ENCODE measurements at regions of chr6 and their contacts with region 1.

Region 1: DNA sequence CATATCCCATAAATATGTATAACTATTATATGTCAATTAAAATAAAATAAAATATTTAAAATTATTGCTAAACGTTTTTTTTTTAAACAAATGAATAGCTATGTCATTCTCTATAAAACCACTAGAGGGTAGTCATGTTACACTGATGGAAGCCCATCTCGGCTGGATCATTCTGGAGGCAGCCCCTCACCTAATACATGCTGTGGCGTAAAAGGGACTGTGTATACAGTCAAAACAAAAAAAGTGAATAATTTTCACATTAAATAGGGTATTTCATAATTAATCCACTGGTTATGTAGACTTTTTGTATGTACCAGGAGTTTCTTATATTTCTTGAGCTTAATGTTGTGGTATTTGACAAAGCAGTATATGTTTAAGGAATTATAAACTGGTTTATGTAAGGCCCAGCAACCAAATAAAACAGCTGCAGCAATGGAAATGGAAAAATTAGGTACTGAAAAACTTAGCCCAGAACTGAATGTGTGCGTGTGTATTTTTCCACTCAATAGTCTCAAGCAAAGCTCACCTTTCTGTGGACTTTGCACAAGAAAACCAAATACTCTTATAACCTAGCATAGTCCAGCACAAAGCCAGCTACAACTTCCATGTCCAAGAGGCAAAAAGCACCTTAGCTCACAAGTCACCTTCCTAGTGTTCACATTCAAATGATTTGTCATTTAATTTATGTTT is 81.7 kb downstream of the COL9A1 start:
- DNase-seq: peak; percentile 7
- ATAC-seq: peak; percentile 77
- H3K4me3 Mint-ChIP-seq: no peak overlapping the region
- H3K27ac Mint-ChIP-seq: no peak overlapping the region
- H3K4me1 Mint-ChIP-seq: no peaks in the 10 kb centered on the region
- H3K27me3 Mint-ChIP-seq: peaks cover 10% of the 10 kb centered on the region
- CTCF ChIP-seq: peak; percentile 81

Region 2: GRCh38 chr6:70142034-70142433 is 79.1 kb before region 1 on chr6:
- CTCF ChIA-PET with region 1: no interaction called
- POLR2A ChIA-PET with region 1: no interaction called
- intact Hi-C with region 1: no loop called
- DNase-seq: no peak
- ATAC-seq: no peak
- H3K4me3 Mint-ChIP-seq: no peak overlapping the region
- H3K27ac Mint-ChIP-seq: no peak overlapping the region
- H3K4me1 Mint-ChIP-seq: no peaks in the 10 kb centered on the region
- H3K27me3 Mint-ChIP-seq: peaks cover 2% of the 10 kb centered on the region
- CTCF ChIP-seq: no peak

Region 3: DNA sequence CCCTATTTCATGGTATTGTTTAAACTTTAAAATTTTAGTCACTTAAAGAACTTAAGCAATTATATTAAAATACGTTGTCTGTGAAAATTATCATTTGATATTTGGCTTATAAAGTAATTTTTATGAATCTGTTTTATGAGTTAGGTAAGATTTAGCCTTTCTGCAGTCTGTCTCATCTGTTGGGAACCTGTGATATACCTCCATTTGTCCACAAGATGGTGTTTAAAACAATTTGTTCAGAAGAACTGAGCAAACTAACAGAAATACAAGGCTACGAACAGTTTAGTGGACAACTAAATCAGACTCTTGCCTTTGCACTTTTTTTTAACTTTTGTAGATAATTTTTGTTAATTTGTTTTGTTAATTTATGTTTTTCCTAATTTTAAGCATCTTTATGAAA is 10.7 kb before region 1 on chr6:
- CTCF ChIA-PET with region 1: interaction called, 28 read pairs
- POLR2A ChIA-PET with region 1: no interaction called
- intact Hi-C with region 1: no loop called
- DNase-seq: no peak
- ATAC-seq: no peak
- H3K4me3 Mint-ChIP-seq: no peak overlapping the region
- H3K27ac Mint-ChIP-seq: no peak overlapping the region
- H3K4me1 Mint-ChIP-seq: no peaks in the 10 kb centered on the region
- H3K27me3 Mint-ChIP-seq: peaks cover 9% of the 10 kb centered on the region
- CTCF ChIP-seq: no peak

Region 4: GRCh38 chr6:70231311-70231710 is 10.1 kb after region 1 on chr6:
- CTCF ChIA-PET with region 1: interaction called, 55 read pairs
- POLR2A ChIA-PET with region 1: no interaction called
- intact Hi-C with region 1: no loop called
- DNase-seq: no peak
- ATAC-seq: no peak
- H3K4me3 Mint-ChIP-seq: no peak overlapping the region
- H3K27ac Mint-ChIP-seq: no peak overlapping the region
- H3K4me1 Mint-ChIP-seq: no peaks in the 10 kb centered on the region
- H3K27me3 Mint-ChIP-seq: peaks cover 5% of the 10 kb centered on the region
- CTCF ChIP-seq: no peak

Region 5: GRCh38 chr6:70236343-70236742 is 15.2 kb after region 1 on chr6:
- CTCF ChIA-PET with region 1: interaction called, 55 read pairs
- POLR2A ChIA-PET with region 1: no interaction called
- intact Hi-C with region 1: no loop called
- DNase-seq: no peak
- ATAC-seq: no peak
- H3K4me3 Mint-ChIP-seq: no peak overlapping the region
- H3K27ac Mint-ChIP-seq: no peak overlapping the region
- H3K4me1 Mint-ChIP-seq: no peaks in the 10 kb centered on the region
- H3K27me3 Mint-ChIP-seq: no peaks in the 10 kb centered on the region
- CTCF ChIP-seq: no peak

Region 6: DNA sequence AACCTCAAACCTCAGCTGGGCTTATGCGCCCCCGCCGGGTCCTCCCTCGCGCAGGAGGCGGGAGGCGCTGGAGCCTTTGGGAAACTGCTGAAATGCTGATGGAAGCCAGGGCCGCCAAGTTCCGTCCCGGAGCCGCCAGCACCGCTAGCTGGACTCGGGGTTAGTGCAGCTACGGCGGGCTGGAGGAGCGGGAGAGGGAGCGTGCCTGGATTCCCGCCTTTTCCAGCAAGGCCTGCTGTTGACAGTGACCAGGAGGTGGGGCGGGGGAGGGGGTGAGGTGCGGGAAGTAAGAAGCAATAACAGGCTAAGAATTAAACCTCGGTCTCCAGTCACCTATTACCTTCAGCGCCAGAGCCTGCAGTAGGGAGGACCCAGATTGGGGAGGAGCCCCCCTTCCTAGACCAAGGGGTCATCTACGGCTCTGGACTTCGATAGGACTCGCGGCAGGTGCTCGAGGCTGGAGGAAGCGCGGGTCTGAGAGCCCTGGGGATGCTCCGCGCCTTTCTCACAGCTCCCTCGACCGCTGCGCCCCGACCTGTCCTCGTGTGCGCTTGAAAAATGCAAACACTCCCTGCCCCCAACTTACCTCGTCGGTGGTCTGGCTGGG is 61.2 kb after region 1 on chr6:
- CTCF ChIA-PET with region 1: no interaction called
- POLR2A ChIA-PET with region 1: no interaction called
- intact Hi-C with region 1: no loop called
- DNase-seq: no peak
- ATAC-seq: no peak
- H3K4me3 Mint-ChIP-seq: no peak overlapping the region
- H3K27ac Mint-ChIP-seq: no peak overlapping the region
- H3K4me1 Mint-ChIP-seq: no peaks in the 10 kb centered on the region
- H3K27me3 Mint-ChIP-seq: peaks cover 34% of the 10 kb centered on the region
- CTCF ChIP-seq: no peak

Region 7: DNA sequence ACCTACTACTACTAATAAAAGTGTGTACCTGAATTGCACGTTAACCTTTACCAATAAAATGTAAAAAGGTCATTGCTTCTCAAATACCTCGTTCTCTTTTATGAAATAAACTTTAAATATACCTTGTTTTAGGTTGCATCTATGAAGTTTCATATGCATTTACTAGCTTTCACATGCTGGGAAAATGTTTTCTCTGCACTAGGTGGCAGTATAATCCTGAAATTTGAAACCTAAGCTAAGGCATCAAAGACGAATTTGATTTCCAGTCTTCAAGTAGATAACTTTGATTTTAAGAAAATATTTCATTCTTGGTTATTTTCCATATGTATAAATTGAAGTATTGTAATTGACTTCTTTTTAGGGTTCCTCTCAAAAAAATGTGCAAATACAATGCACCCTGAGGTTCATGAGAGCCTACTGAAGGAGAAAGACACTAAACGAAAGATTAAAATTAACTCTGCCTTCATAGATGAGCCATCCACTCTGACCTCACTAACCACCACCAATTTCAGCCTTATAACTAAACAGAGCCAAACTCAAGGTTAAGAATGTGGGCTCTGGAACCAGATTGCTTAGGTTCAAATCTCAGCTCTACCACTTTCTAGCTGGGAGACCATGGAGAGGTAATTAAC is 89.0 kb after region 1 on chr6:
- CTCF ChIA-PET with region 1: interaction called, 30 read pairs
- POLR2A ChIA-PET with region 1: no interaction called
- intact Hi-C with region 1: no loop called
- DNase-seq: no peak
- ATAC-seq: no peak
- H3K4me3 Mint-ChIP-seq: no peak overlapping the region
- H3K27ac Mint-ChIP-seq: no peak overlapping the region
- H3K4me1 Mint-ChIP-seq: peaks cover 7% of the 10 kb centered on the region
- H3K27me3 Mint-ChIP-seq: peaks cover 22% of the 10 kb centered on the region
- CTCF ChIP-seq: peak; percentile 42

Region 8: GRCh38 chr6:70369332-70369950 is 148.3 kb after region 1 on chr6:
- CTCF ChIA-PET with region 1: interaction called, 80 read pairs
- POLR2A ChIA-PET with region 1: no interaction called
- intact Hi-C with region 1: loop called (anchors 2 kb)
- DNase-seq: peak; percentile 74
- ATAC-seq: peak; percentile 94
- H3K4me3 Mint-ChIP-seq: no peak overlapping the region
- H3K27ac Mint-ChIP-seq: no peak overlapping the region
- H3K4me1 Mint-ChIP-seq: no peaks in the 10 kb centered on the region
- H3K27me3 Mint-ChIP-seq: peaks cover 5% of the 10 kb centered on the region
- CTCF ChIP-seq: peak; percentile 93

Region 9: DNA sequence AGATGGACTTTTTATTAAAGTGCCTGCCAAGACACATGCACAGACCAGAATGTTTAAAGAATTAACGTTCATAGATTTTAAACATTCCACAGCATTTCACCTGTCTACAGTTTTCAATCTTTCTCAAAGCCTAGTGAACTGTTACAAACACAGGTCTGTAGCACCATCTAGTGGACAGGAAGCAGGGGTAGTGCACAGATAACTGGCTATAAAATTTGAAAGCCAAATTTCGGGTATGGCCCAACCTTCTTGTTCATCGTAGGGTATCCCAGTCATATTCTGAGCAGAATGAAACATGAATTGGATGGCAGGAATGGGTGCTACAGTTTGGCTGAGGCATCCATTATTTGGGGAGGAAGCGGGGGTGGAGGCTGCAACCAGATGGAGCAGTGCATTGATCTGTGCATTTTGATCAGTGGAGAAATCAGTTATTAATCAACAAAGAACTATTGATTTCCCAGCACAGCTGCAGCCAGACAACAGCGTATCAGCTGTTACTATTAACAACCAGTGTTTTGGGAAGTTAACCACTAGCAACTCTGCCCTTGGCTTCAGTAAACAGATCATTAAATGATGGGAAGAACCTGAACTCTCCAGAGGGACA is 791.8 kb after region 1 on chr6:
- CTCF ChIA-PET with region 1: interaction called, 11 read pairs
- POLR2A ChIA-PET with region 1: no interaction called
- intact Hi-C with region 1: no loop called
- DNase-seq: peak; percentile 15
- ATAC-seq: peak; percentile 51
- H3K4me3 Mint-ChIP-seq: no peak overlapping the region
- H3K27ac Mint-ChIP-seq: no peak overlapping the region
- H3K4me1 Mint-ChIP-seq: no peaks in the 10 kb centered on the region
- H3K27me3 Mint-ChIP-seq: peaks cover 10% of the 10 kb centered on the region
- CTCF ChIP-seq: peak; percentile 76